Panc1 (cell line): ENCODE measurements at regions of chr1 and their contacts with region 1.

Region 1: GRCh38 chr1:153532769-153533599 is 2.8 kb downstream of the S100A6 start:
- DNase-seq: no peak
- ATAC-seq: peak; percentile 61
- H3K4me3 ChIP-seq: peak overlapping the region; percentile 75 to 86
- H3K27ac ChIP-seq: peak overlapping the region; percentile 91
- H3K4me1 ChIP-seq: peaks cover 36% of the 10 kb centered on the region
- H3K27me3 ChIP-seq: no peaks in the 10 kb centered on the region
- CTCF ChIP-seq: peak; percentile 96

Region 2: DNA sequence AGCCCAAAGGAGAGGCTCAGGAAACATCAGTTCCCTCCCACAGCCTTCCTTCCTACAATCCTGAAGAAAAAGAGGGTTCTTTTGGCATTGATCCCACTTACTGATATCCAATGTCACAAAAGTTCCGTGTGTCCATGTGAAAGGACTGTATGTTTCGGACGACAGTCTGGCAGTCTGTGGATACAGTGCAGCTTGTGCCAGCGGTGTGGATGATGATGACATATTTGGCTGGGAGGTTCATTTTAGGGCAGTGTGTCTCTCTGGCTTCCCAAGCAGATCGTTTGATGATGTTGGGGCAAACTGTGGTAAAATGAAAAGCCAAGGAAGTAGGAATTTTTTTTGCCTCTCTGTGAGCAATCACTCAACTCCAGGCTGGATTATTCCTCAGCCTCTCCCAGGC is 230.7 kb before region 1 on chr1:
- CTCF ChIA-PET with region 1: no interaction called
- POLR2A ChIA-PET with region 1: no interaction called
- in situ Hi-C with region 1: no loop called
- intact Hi-C with region 1: no loop called
- DNase-seq: no peak
- ATAC-seq: no peak
- H3K4me3 ChIP-seq: no peak overlapping the region
- H3K27ac ChIP-seq: no peak overlapping the region
- H3K4me1 ChIP-seq: no peaks in the 10 kb centered on the region
- H3K27me3 ChIP-seq: peaks cover 4% of the 10 kb centered on the region
- CTCF ChIP-seq: no peak

Region 3: DNA sequence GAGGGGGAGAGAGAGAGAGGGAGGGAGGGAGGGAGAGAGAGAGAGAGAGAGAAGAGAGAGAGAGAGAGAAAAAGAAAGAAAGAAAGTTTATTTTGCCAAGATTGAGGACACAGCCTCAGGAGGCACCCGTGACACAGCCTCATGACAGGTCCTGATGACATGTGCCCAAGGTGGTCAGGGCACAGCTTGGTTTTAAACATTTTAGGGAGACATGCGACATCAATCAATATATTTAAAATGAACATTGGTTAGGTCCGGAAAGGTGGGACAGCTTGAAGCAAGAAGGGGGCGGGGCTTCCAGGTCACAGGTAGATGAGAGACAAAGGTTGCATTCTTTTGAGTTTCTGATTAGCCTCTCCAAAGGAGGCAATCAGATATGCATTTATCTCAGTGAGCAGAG is 12.8 kb before region 1 on chr1:
- CTCF ChIA-PET with region 1: interaction called, 10 read pairs
- POLR2A ChIA-PET with region 1: interaction called, 3 read pairs
- in situ Hi-C with region 1: no loop called
- intact Hi-C with region 1: no loop called
- DNase-seq: no peak
- ATAC-seq: no peak
- H3K4me3 ChIP-seq: no peak overlapping the region
- H3K27ac ChIP-seq: no peak overlapping the region
- H3K4me1 ChIP-seq: peaks cover 3% of the 10 kb centered on the region; the same call in 1 of the 2 replicates
- H3K27me3 ChIP-seq: no peaks in the 10 kb centered on the region
- CTCF ChIP-seq: no peak

Region 4: GRCh38 chr1:153545067-153546055 is 12.4 kb after region 1 on chr1 and contains the start of gene S100A4:
- CTCF ChIA-PET with region 1: interaction called, 16 read pairs
- POLR2A ChIA-PET with region 1: interaction called, 9 read pairs
- in situ Hi-C with region 1: no loop called
- intact Hi-C with region 1: no loop called
- DNase-seq: peak; percentile 68
- ATAC-seq: peak; percentile 75
- H3K4me3 ChIP-seq: peak within 1 kb of the TSS; percentile 49 to 55
- H3K27ac ChIP-seq: peak within 1 kb of the TSS; percentile 98
- H3K4me1 ChIP-seq: peaks cover 98% of the 10 kb centered on the region
- H3K27me3 ChIP-seq: no peaks in the 10 kb centered on the region
- CTCF ChIP-seq: no peak
- total RNA-seq, gene S100A4: 773 TPM

Region 5: DNA sequence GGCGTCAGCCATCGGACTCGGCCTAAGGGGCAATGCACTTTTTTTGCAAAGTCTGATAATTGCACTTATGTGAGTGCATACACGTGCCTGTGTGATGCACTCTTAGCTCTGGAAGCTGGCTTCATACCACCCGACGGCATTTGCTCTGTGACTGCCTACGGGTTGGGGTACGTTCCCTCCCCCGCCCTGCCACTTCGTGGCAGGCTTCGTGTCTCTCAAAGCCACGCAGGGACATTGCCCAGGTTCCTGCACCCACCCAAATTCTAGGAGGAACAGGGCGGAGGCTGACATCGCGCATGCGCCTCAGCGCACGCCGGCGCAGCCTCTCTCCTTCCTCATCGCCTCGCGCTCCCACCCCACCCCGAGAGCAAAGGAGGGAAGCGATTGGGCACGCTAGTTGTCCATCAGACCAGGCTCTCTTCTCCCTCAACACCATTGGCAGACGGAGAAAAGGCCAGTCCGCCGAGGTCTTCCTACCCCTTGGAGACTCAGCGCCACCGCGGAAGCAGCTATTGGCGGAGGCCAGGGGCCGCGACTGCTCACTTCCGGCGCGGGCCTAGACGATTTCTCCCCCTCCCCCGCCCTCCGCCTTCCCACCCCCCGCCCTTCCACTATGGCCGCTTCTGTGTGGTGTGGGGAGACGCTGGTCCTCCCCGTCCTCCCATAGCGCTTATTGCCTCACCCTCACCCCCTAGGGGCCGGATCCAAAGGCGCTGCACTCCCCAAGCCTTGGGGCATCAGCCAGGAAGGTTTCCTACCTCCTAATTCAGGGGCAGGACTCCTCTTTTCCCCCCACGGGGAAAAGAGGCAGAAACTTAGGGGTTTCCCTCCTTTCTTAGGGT is 194.7 kb after region 1 on chr1 and contains the start of gene INTS3:
- CTCF ChIA-PET with region 1: no interaction called
- POLR2A ChIA-PET with region 1: no interaction called
- in situ Hi-C with region 1: no loop called
- intact Hi-C with region 1: no loop called
- DNase-seq: peak; percentile 99
- ATAC-seq: peak; percentile 100
- H3K4me3 ChIP-seq: peak within 1 kb of the TSS; percentile 89 to 100
- H3K27ac ChIP-seq: peak within 1 kb of the TSS; percentile 98
- H3K4me1 ChIP-seq: peaks cover 14% of the 10 kb centered on the region
- H3K27me3 ChIP-seq: no peaks in the 10 kb centered on the region
- CTCF ChIP-seq: no peak
- total RNA-seq, gene INTS3: 77.3 TPM